Activated CD8-positive, alpha-beta T cell treated with anti-CD3 and anti-CD28 coated beads for 36 hours (primary cell): ENCODE measurements at regions of chr12 and their contacts with region 1.

Region 1: GRCh38 chr12:124767066-124767821 is 96.4 kb downstream of the SCARB1 start:
- DNase-seq: peak; percentile 88
- ATAC-seq: peak; percentile 79
- H3K4me3 Mint-ChIP-seq: no peak overlapping the region
- H3K27ac Mint-ChIP-seq: no peak overlapping the region
- H3K4me1 Mint-ChIP-seq: peaks cover 27% of the 10 kb centered on the region
- H3K27me3 Mint-ChIP-seq: peaks cover 13% of the 10 kb centered on the region
- CTCF ChIP-seq: peak; percentile 100

Region 2: GRCh38 chr12:124036674-124037109 is 730.6 kb before region 1 on chr12:
- CTCF ChIA-PET with region 1: interaction called, 10 read pairs
- POLR2A ChIA-PET with region 1: no interaction called
- intact Hi-C with region 1: loop called (anchors 2 kb)
- DNase-seq: peak; percentile 54
- ATAC-seq: peak; percentile 62
- H3K4me3 Mint-ChIP-seq: no peak overlapping the region
- H3K27ac Mint-ChIP-seq: no peak overlapping the region
- H3K4me1 Mint-ChIP-seq: no peaks in the 10 kb centered on the region
- H3K27me3 Mint-ChIP-seq: no peaks in the 10 kb centered on the region
- CTCF ChIP-seq: peak; percentile 99

Region 3: GRCh38 chr12:124453419-124454351 is 313.6 kb before region 1 on chr12:
- CTCF ChIA-PET with region 1: interaction called, 11 read pairs
- POLR2A ChIA-PET with region 1: no interaction called
- intact Hi-C with region 1: loop called (anchors 10 kb)
- DNase-seq: peak; percentile 94
- ATAC-seq: peak; percentile 87
- H3K4me3 Mint-ChIP-seq: no peak overlapping the region
- H3K27ac Mint-ChIP-seq: no peak overlapping the region
- H3K4me1 Mint-ChIP-seq: peaks cover 65% of the 10 kb centered on the region
- H3K27me3 Mint-ChIP-seq: no peaks in the 10 kb centered on the region
- CTCF ChIP-seq: no peak

Region 4: GRCh38 chr12:124609041-124609995 is 157.9 kb before region 1 on chr12:
- CTCF ChIA-PET with region 1: interaction called, 10 read pairs
- POLR2A ChIA-PET with region 1: no interaction called
- intact Hi-C with region 1: no loop called
- DNase-seq: peak; percentile 89
- ATAC-seq: peak; percentile 89
- H3K4me3 Mint-ChIP-seq: peak overlapping the region; percentile 10
- H3K27ac Mint-ChIP-seq: no peak overlapping the region
- H3K4me1 Mint-ChIP-seq: peaks cover 22% of the 10 kb centered on the region
- H3K27me3 Mint-ChIP-seq: peaks cover 2% of the 10 kb centered on the region
- CTCF ChIP-seq: no peak

Region 5: GRCh38 chr12:124869034-124869665 is 101.9 kb after region 1 on chr12:
- CTCF ChIA-PET with region 1: no interaction called
- POLR2A ChIA-PET with region 1: no interaction called
- intact Hi-C with region 1: no loop called
- DNase-seq: no peak
- ATAC-seq: peak; percentile 51
- H3K4me3 Mint-ChIP-seq: no peak overlapping the region
- H3K27ac Mint-ChIP-seq: no peak overlapping the region
- H3K4me1 Mint-ChIP-seq: peaks cover 11% of the 10 kb centered on the region
- H3K27me3 Mint-ChIP-seq: peaks cover 8% of the 10 kb centered on the region
- CTCF ChIP-seq: no peak

Region 6: DNA sequence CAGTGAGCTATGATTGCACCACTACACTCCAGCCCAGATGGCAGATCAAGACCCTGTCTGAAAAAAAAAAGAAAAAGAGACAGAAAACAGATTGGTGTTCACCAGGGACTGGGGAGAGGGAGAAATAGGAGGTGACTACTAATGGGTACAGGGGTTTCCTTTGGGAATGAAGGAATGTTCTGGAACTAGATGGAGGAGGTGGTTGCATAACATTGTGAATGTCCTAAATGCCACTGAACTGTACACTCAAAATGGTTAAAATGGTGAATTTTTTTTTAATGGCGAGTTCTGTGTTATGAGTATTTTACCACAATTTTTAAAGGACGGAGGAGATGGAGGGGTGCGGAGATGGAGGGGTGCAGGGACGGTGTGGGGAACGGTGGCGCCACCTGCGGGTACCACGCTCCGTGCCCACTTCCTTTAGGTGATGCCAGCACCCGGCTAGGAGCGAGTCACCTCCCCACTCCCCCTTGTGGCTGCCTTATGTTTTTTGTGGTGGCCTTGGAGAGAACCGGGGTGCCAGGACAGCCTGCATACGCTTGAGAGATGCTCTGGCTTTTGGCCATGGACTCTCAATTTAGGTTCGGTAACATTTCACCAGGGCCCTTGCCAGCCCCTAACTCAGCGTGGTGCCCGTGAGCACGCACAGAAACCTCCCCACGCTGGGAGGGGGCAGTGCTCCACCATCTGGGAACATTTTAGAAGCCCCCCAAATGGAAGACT is 131.1 kb after region 1 on chr12:
- CTCF ChIA-PET with region 1: no interaction called
- POLR2A ChIA-PET with region 1: no interaction called
- intact Hi-C with region 1: loop called (anchors 10 kb)
- DNase-seq: peak; percentile 82
- ATAC-seq: peak; percentile 92
- H3K4me3 Mint-ChIP-seq: peak overlapping the region; percentile 3
- H3K27ac Mint-ChIP-seq: no peak overlapping the region
- H3K4me1 Mint-ChIP-seq: peaks cover 11% of the 10 kb centered on the region
- H3K27me3 Mint-ChIP-seq: no peaks in the 10 kb centered on the region
- CTCF ChIP-seq: peak; percentile 71